K562 (cell line): ENCODE measurements at regions of chr7 and their contacts with region 1.

Region 1: DNA sequence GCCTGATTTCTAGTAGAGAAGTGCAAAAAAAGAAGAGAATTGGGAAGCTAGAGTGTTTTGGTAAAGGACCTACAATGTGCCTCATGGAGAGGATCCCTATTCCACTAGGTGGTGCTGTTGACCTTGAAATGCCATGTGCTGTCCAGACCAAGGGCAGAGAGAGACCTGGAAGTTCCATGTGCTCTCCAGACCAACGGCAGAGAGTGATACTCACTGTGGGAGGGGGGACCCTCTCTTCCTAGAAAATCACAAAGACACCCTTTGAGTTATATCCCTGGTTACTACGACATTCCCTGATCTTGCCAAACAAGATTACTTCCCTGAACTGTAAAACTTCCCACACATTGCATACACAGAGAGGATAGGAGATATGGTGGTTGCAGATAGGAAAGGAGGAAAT is 212.7 kb upstream of the ZNF804B start:
- DNase-seq: peak; percentile 50 to 85 (median 54)
- ATAC-seq: peak; percentile 98
- H3K4me3 ChIP-seq: no peak overlapping the region
- H3K27ac ChIP-seq: no peak overlapping the region
- H3K4me1 ChIP-seq: no peaks in the 10 kb centered on the region
- H3K27me3 ChIP-seq: no peaks in the 10 kb centered on the region
- CTCF ChIP-seq: peak; percentile 73 to 88 (median 86)
- EP300 ChIP-seq: no peak
- POLR2A ChIP-seq: no peak
- RAD21 ChIP-seq: peak; percentile 98 to 99

Region 2: GRCh38 chr7:88101769-88102168 is 445.0 kb before region 1 on chr7:
- CTCF ChIA-PET with region 1: no interaction called
- POLR2A ChIA-PET with region 1: no interaction called
- in situ Hi-C with region 1: no loop called
- intact Hi-C with region 1: no loop called
- DNase-seq: no peak
- ATAC-seq: no peak
- H3K4me3 ChIP-seq: no peak overlapping the region
- H3K27ac ChIP-seq: no peak overlapping the region
- H3K4me1 ChIP-seq: no peaks in the 10 kb centered on the region
- H3K27me3 ChIP-seq: no peaks in the 10 kb centered on the region; a peak in 1 of 5 replicates
- CTCF ChIP-seq: no peak
- EP300 ChIP-seq: no peak
- POLR2A ChIP-seq: no peak
- RAD21 ChIP-seq: no peak

Region 3: DNA sequence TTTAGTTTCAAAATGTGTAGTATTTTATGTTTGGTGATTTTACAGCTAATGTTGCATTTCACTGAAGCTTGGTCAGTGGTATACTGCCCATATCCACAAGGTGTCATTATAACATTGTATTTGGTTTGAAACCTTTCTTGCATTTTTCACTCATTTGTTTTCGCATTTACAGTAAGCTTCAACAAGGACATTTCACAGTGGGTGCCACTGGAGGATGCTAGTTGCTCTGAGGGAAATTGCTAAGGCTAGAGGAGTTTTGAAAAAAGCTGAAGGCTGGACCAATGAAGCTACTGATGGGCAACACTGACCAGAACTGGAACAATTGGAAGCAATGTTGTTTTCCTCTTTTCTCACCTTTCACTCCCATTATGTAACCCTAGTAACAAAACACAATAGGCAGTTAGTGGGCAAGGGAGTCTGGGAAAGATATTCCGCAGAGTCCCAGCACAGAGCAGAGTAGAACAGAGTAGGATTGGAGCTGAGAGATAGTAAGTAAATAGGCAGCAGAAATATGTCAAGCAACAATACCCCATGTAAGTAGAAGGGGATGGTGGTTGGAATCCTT is 303.4 kb before region 1 on chr7:
- CTCF ChIA-PET with region 1: no interaction called
- POLR2A ChIA-PET with region 1: no interaction called
- in situ Hi-C with region 1: no loop called
- intact Hi-C with region 1: loop called (anchors 2 kb)
- DNase-seq: peak in 2 of 4 experiments; percentile 29 to 45
- ATAC-seq: peak; percentile 88
- H3K4me3 ChIP-seq: no peak overlapping the region
- H3K27ac ChIP-seq: no peak overlapping the region
- H3K4me1 ChIP-seq: no peaks in the 10 kb centered on the region
- H3K27me3 ChIP-seq: no peaks in the 10 kb centered on the region
- CTCF ChIP-seq: peak; percentile 54 to 81 (median 68); a peak in 5 of 6 replicates
- EP300 ChIP-seq: no peak
- POLR2A ChIP-seq: no peak
- RAD21 ChIP-seq: peak; percentile 83 to 84

Region 4: DNA sequence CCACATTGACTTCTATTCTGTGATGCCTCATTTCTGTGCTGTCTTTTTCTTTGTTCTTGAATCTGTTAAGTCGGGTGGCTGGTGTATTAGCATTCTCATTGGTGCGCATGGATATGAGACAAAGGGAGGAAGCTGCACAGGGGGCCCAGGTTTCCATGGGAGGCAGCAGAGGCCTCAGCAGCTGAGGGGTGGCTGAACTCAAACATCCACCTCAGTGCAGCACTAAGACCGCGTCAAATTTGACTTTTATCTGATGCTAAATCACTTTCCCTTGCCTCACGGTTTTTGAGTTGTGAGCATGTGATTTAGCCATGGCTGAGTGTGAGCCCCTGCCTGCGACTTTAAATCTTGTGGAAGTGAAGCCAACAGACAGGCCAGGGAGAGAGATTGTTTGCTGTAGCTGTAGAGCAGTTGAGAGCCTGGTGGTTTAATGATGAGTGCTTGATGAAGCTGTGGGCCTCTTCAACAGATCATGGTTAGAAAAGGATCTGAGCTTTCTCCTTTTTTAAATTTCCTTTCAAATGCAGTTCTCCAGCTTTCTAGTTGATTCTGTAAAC is 19.4 kb after region 1 on chr7:
- CTCF ChIA-PET with region 1: no interaction called
- POLR2A ChIA-PET with region 1: no interaction called
- in situ Hi-C with region 1: no loop called
- intact Hi-C with region 1: no loop called
- DNase-seq: no peak
- ATAC-seq: peak; percentile 56
- H3K4me3 ChIP-seq: no peak overlapping the region
- H3K27ac ChIP-seq: no peak overlapping the region
- H3K4me1 ChIP-seq: no peaks in the 10 kb centered on the region; a peak in 2 of 5 replicates
- H3K27me3 ChIP-seq: no peaks in the 10 kb centered on the region
- CTCF ChIP-seq: no peak
- EP300 ChIP-seq: no peak
- POLR2A ChIP-seq: no peak
- RAD21 ChIP-seq: no peak

Region 5: GRCh38 chr7:88835147-88835728 is 288.4 kb after region 1 on chr7:
- CTCF ChIA-PET with region 1: interaction called, 3 read pairs
- POLR2A ChIA-PET with region 1: interaction called, 3 read pairs
- in situ Hi-C with region 1: no loop called
- intact Hi-C with region 1: loop called (anchors 1 kb)
- DNase-seq: peak; percentile 17 to 33 (median 23)
- ATAC-seq: peak; percentile 76
- H3K4me3 ChIP-seq: no peak overlapping the region
- H3K27ac ChIP-seq: no peak overlapping the region
- H3K4me1 ChIP-seq: no peaks in the 10 kb centered on the region
- H3K27me3 ChIP-seq: no peaks in the 10 kb centered on the region
- CTCF ChIP-seq: peak; percentile 44 to 65 (median 57); a peak in 5 of 6 replicates
- EP300 ChIP-seq: no peak
- POLR2A ChIP-seq: no peak
- RAD21 ChIP-seq: peak; percentile 62 to 66

Region 6: GRCh38 chr7:90119178-90119971 is 1572.6 kb after region 1 on chr7:
- CTCF ChIA-PET with region 1: interaction called, 3 read pairs
- POLR2A ChIA-PET with region 1: no interaction called
- in situ Hi-C with region 1: loop called (anchors 25 kb)
- intact Hi-C with region 1: no loop called
- DNase-seq: no peak
- ATAC-seq: no peak; the same call in 2 of the 3 replicates
- H3K4me3 ChIP-seq: no peak overlapping the region
- H3K27ac ChIP-seq: no peak overlapping the region
- H3K4me1 ChIP-seq: peaks cover 0 to 8% of the 10 kb centered on the region in 2 experiments; a peak in 2 of 5 replicates
- H3K27me3 ChIP-seq: no peaks in the 10 kb centered on the region; a peak in 1 of 5 replicates
- CTCF ChIP-seq: no peak
- EP300 ChIP-seq: no peak
- POLR2A ChIP-seq: no peak
- RAD21 ChIP-seq: no peak

Region 7: GRCh38 chr7:90430614-90431471 is 1884.0 kb after region 1 on chr7:
- CTCF ChIA-PET with region 1: interaction called, 3 read pairs
- POLR2A ChIA-PET with region 1: no interaction called
- in situ Hi-C with region 1: loop called (anchors 10 kb)
- intact Hi-C with region 1: loop called (anchors 2 kb)
- DNase-seq: no peak
- ATAC-seq: no peak
- H3K4me3 ChIP-seq: no peak overlapping the region
- H3K27ac ChIP-seq: no peak overlapping the region
- H3K4me1 ChIP-seq: no peaks in the 10 kb centered on the region
- H3K27me3 ChIP-seq: no peaks in the 10 kb centered on the region; a peak in 1 of 5 replicates
- CTCF ChIP-seq: no peak
- EP300 ChIP-seq: no peak
- POLR2A ChIP-seq: no peak
- RAD21 ChIP-seq: no peak